Activated CD4-positive, alpha-beta memory T cell treated with anti-CD3 and anti-CD28 coated beads for 36 hours (primary cell): ENCODE measurements at regions of chr10 and their contacts with region 1.

Region 1: GRCh38 chr10:63707254-63707910 is 186.2 kb downstream of the REEP3 start:
- DNase-seq: peak; percentile 48
- H3K4me3 Mint-ChIP-seq: no peak overlapping the region
- H3K27ac Mint-ChIP-seq: peak overlapping the region; percentile 20
- H3K4me1 Mint-ChIP-seq: peaks cover 12% of the 10 kb centered on the region
- H3K27me3 Mint-ChIP-seq: no peaks in the 10 kb centered on the region

Region 2: GRCh38 chr10:62851442-62851841 is 855.9 kb before region 1 on chr10:
- CTCF ChIA-PET with region 1: no interaction called
- POLR2A ChIA-PET with region 1: no interaction called
- intact Hi-C with region 1: loop called (anchors 10 kb)
- DNase-seq: peak; percentile 55
- H3K4me3 Mint-ChIP-seq: no peak overlapping the region
- H3K27ac Mint-ChIP-seq: no peak overlapping the region
- H3K4me1 Mint-ChIP-seq: peaks cover 46% of the 10 kb centered on the region
- H3K27me3 Mint-ChIP-seq: peaks cover 8% of the 10 kb centered on the region

Region 3: GRCh38 chr10:63173468-63174232 is 533.7 kb before region 1 on chr10:
- CTCF ChIA-PET with region 1: interaction called, 3 read pairs
- POLR2A ChIA-PET with region 1: interaction called, 3 read pairs
- intact Hi-C with region 1: loop called (anchors 1 kb)
- DNase-seq: no peak
- H3K4me3 Mint-ChIP-seq: no peak overlapping the region
- H3K27ac Mint-ChIP-seq: peak overlapping the region; percentile 65
- H3K4me1 Mint-ChIP-seq: peaks cover 52% of the 10 kb centered on the region
- H3K27me3 Mint-ChIP-seq: no peaks in the 10 kb centered on the region

Region 4: GRCh38 chr10:63217120-63217605 is 490.2 kb before region 1 on chr10:
- CTCF ChIA-PET with region 1: no interaction called
- POLR2A ChIA-PET with region 1: no interaction called
- intact Hi-C with region 1: loop called (anchors 2 kb)
- DNase-seq: no peak
- H3K4me3 Mint-ChIP-seq: no peak overlapping the region
- H3K27ac Mint-ChIP-seq: peak overlapping the region; percentile 42
- H3K4me1 Mint-ChIP-seq: peaks cover 55% of the 10 kb centered on the region
- H3K27me3 Mint-ChIP-seq: no peaks in the 10 kb centered on the region

Region 5: GRCh38 chr10:63355682-63356081 is 351.7 kb before region 1 on chr10:
- CTCF ChIA-PET with region 1: no interaction called
- POLR2A ChIA-PET with region 1: no interaction called
- intact Hi-C with region 1: loop called (anchors 10 kb)
- DNase-seq: no peak
- H3K4me3 Mint-ChIP-seq: no peak overlapping the region
- H3K27ac Mint-ChIP-seq: no peak overlapping the region
- H3K4me1 Mint-ChIP-seq: peaks cover 25% of the 10 kb centered on the region
- H3K27me3 Mint-ChIP-seq: no peaks in the 10 kb centered on the region

Region 6: DNA sequence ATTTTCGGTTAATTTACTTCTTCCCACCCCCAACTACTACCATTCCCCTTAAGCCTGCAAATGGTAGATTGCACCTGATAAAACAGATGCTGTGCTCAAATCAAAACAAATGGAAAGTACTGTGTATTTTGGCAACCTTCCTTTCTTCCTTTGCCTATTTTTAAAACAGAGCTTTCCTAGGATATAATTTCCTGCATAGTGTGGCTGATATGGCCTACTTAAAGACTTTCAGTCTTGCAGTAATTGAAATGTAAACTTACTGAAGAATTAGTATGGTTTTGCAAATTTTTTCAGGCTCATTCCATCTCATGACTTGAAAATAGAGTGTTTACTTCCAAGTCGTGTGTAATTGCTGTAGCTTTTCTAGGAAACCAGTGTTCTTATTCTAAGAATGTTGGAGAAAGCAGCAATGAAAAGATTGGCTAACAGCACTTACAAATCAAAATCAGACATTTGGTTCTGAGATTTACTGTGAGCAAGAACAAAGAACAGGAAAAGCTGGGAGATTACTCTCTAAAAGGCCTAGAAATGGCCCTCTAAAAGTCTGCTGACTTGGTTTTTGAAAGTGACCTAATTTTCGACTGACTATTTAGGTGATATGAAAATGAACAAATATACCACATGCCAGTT is 134.2 kb before region 1 on chr10:
- CTCF ChIA-PET with region 1: no interaction called
- POLR2A ChIA-PET with region 1: no interaction called
- intact Hi-C with region 1: loop called (anchors 1 kb)
- DNase-seq: no peak
- H3K4me3 Mint-ChIP-seq: no peak overlapping the region
- H3K27ac Mint-ChIP-seq: peak overlapping the region; percentile 40
- H3K4me1 Mint-ChIP-seq: peaks cover 28% of the 10 kb centered on the region
- H3K27me3 Mint-ChIP-seq: no peaks in the 10 kb centered on the region

Region 7: GRCh38 chr10:63670291-63670898 is 37.0 kb before region 1 on chr10:
- CTCF ChIA-PET with region 1: no interaction called
- POLR2A ChIA-PET with region 1: no interaction called
- intact Hi-C with region 1: loop called (anchors 1 kb)
- DNase-seq: no peak
- H3K4me3 Mint-ChIP-seq: no peak overlapping the region
- H3K27ac Mint-ChIP-seq: no peak overlapping the region
- H3K4me1 Mint-ChIP-seq: peaks cover 7% of the 10 kb centered on the region
- H3K27me3 Mint-ChIP-seq: peaks cover 5% of the 10 kb centered on the region

Region 8: GRCh38 chr10:63726867-63727266 is 19.5 kb after region 1 on chr10:
- CTCF ChIA-PET with region 1: no interaction called
- POLR2A ChIA-PET with region 1: no interaction called
- intact Hi-C with region 1: no loop called
- DNase-seq: no peak
- H3K4me3 Mint-ChIP-seq: no peak overlapping the region
- H3K27ac Mint-ChIP-seq: no peak overlapping the region
- H3K4me1 Mint-ChIP-seq: no peaks in the 10 kb centered on the region
- H3K27me3 Mint-ChIP-seq: peaks cover 30% of the 10 kb centered on the region